ENCODE measurements at regions of chr16 and their contacts with region 1.

Region 1: GRCh38 chr16:81204798-81205680 is 33.5 kb upstream of the BCO1 start:
- DNase-seq: peak in 16 of 35 experiments; percentile 8 to 69 (median 24)
- ATAC-seq: no peak
- H3K4me3 ChIP-seq: no peak overlapping the region
- H3K4me3 Mint-ChIP-seq: no peak overlapping the region
- H3K27ac ChIP-seq: no peak overlapping the region
- H3K27ac Mint-ChIP-seq: no peak overlapping the region
- H3K4me1 ChIP-seq: no peaks in the 10 kb centered on the region
- H3K4me1 Mint-ChIP-seq: no peaks in the 10 kb centered on the region
- H3K27me3 ChIP-seq: peaks cover 0 to 17% of the 10 kb centered on the region in 2 experiments
- H3K27me3 Mint-ChIP-seq: peaks cover 7 to 21% of the 10 kb centered on the region in 2 donors

Region 2: DNA sequence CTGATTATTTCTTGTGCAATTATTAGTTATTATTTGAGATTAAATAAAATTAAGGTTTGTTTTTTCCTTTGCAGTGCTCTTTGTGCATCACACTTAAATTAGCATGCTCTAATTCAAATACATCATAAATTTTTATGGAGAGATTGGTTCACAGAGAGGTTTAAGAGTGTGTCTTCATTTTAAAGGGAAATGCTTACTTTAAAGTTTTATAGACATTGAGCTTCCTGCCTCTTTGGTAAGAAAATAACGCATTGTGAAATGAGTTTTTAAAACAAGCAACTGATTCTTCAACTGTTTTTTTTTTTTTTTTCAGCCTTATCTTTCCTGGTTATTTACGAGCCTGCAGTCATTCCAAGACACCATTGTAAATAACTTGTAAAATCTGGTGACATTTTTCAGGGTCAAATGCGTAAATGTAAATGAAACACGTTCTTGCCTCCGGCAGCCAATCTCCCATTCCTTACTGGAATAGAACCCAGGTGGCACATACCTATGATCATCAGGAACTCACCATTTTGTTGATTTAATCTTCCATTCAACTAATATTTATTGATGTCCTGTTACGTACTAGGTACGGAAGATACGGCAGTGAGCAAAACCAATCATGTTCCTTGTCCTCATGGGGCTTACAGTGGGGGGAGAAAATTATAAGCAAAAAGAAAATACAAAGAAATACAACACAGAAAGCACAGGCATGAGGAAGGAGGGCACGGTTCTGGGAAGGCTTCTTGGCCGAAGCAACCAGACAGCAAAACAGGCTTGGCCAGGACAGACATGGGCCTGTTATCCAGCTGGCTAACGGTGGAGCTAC is 367.4 kb before region 1 on chr16:
- CTCF ChIA-PET with region 1: interaction called in 1 of 2 experiments, 11 read pairs
- POLR2A ChIA-PET with region 1: no interaction called
- DNase-seq: no peak
- ATAC-seq: no peak
- H3K4me3 ChIP-seq: no peak overlapping the region
- H3K4me3 Mint-ChIP-seq: no peak overlapping the region
- H3K27ac ChIP-seq: no peak overlapping the region
- H3K27ac Mint-ChIP-seq: no peak overlapping the region
- H3K4me1 ChIP-seq: no peaks in the 10 kb centered on the region
- H3K4me1 Mint-ChIP-seq: peaks cover 0 to 7% (median 0%) of the 10 kb centered on the region in 3 donors
- H3K27me3 ChIP-seq: peaks cover 0 to 10% of the 10 kb centered on the region in 2 experiments
- H3K27me3 Mint-ChIP-seq: peaks cover 40 to 54% of the 10 kb centered on the region in 2 donors

Measured in T-cell (primary cell).